Ascending aorta (tissue), 2 donors: ENCODE measurements at regions of chr1 and their contacts with region 1.

Region 1: GRCh38 chr1:159071970-159072582 is 4.5 kb downstream of the AIM2 start:
- DNase-seq: no peak
- H3K4me3 ChIP-seq: no peak overlapping the region
- H3K27ac ChIP-seq: no peak overlapping the region
- H3K4me1 ChIP-seq: no peaks in the 10 kb centered on the region
- H3K27me3 ChIP-seq: no peaks in the 10 kb centered on the region
- CTCF ChIP-seq: peak; percentile 25 to 71 (median 67)

Region 2: DNA sequence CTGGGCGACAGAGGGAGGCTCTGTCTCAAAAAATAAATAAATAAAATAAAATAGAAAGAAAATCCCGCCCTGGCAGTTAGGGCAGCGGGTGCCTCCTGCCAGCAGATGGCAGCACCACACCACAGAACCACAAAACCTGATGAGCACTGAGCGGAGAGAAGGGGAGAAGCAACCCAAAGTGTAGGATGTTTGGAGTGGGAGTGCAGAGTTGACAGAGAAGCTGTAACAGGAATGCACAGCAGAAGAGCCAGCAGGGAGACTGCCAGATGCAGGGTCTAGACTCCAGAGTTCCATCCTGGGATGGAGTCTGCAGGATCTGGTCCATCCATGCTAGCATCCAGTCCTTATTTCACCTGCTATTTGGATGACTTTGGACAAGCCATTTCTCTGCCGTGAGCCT is 1108.4 kb before region 1 on chr1:
- intact Hi-C with region 1: loop called (anchors 10 kb)
- DNase-seq: peak in 1 of 2 donors; percentile 79
- H3K4me3 ChIP-seq: no peak overlapping the region
- H3K27ac ChIP-seq: no peak overlapping the region
- H3K4me1 ChIP-seq: peaks cover 4% of the 10 kb centered on the region in 2 donors
- H3K27me3 ChIP-seq: no peaks in the 10 kb centered on the region
- CTCF ChIP-seq: peak; percentile 87 to 95 (median 93)

Region 3: DNA sequence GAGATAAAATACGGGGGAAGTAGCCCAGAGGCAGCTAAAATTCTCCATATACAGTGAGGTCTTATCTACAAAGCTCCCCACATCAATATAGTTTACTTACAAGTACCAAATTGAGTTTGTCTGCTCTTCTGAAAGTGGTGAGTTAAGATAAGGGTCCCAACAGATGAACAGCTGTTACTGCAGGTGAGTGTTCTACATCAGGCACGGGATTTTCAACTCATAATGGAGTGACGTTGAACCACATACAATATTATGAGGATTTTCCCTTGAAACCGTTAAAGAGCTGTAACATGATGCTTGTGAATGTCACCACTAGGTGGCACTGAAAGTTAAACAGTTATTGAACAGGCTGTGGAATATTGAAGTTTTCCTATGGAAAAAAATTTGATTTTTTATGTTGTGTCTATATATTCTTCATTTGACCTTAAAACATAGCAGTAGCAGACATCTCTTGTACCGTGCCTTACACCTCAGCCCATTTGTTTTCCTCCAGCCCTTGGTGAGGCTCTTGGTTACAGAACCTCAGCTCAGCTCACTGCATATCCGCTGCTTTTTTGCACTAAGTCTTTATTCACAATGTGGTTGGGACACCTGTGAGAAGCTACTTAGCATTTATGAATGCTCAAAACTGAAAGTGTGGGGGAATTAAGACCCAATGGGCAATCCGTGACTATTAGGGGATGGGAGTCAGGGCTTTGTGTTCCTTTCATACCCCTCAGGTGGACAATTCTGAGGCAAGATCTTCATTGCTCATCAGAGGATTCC is 868.2 kb before region 1 on chr1:
- intact Hi-C with region 1: loop called (anchors 1 kb)
- DNase-seq: no peak
- H3K4me3 ChIP-seq: no peak overlapping the region
- H3K27ac ChIP-seq: no peak overlapping the region
- H3K4me1 ChIP-seq: no peaks in the 10 kb centered on the region
- H3K27me3 ChIP-seq: no peaks in the 10 kb centered on the region
- CTCF ChIP-seq: peak; percentile 55 to 73 (median 64)

Region 4: DNA sequence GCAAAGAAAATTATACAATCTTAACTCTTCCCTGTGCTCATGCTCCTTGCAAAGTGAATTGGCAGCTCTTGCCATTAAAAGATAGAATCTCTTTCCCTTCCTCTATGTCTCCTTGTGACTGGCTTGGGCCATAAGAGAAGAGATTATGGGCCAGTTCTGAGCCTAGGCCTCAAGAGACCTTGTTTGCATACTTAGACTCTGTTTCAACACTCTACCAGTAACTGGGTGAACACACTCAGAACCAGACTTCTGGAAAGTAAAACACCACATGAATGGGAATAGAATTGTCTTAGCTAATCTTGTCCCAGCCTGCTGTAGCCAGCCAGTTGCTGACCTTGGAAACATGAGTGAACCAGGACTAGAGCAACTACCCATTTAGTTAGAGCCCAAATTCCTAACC is 336.2 kb before region 1 on chr1:
- intact Hi-C with region 1: no loop called
- DNase-seq: no peak
- H3K4me3 ChIP-seq: no peak overlapping the region
- H3K27ac ChIP-seq: no peak overlapping the region
- H3K4me1 ChIP-seq: no peaks in the 10 kb centered on the region
- H3K27me3 ChIP-seq: no peaks in the 10 kb centered on the region
- CTCF ChIP-seq: no peak